ENCODE measurements at regions of chr11 and their contacts with region 1.

Region 1: GRCh38 chr11:70397983-70398833 is at the start of gene CTTN:
- DNase-seq: peak; percentile 64
- H3K4me3 ChIP-seq: peak within 1 kb of the TSS; percentile 77 to 91
- H3K27ac ChIP-seq: peak within 1 kb of the TSS; percentile 83 to 84
- H3K4me1 ChIP-seq: no peaks in the 10 kb centered on the region
- H3K27me3 ChIP-seq: no peaks in the 10 kb centered on the region
- CTCF ChIP-seq: no peak
- POLR2A ChIP-seq: peak; percentile 90
- total RNA-seq, gene CTTN: 208 to 348 TPM

Region 2: GRCh38 chr11:70202898-70203748 is 195.1 kb before region 1 on chr11 and contains the start of gene FADD:
- intact Hi-C with region 1: loop called (anchors 10 kb)
- DNase-seq: peak; percentile 84
- H3K4me3 ChIP-seq: peak within 1 kb of the TSS; percentile 94 to 96
- H3K27ac ChIP-seq: peak within 1 kb of the TSS; percentile 75 to 77
- H3K4me1 ChIP-seq: peaks cover 8% of the 10 kb centered on the region
- H3K27me3 ChIP-seq: no peaks in the 10 kb centered on the region
- CTCF ChIP-seq: peak in 2 of 4 experiments; percentile 14 to 24
- POLR2A ChIP-seq: peak; percentile 74
- total RNA-seq, gene FADD: 16.0 to 18.4 TPM

Region 3: DNA sequence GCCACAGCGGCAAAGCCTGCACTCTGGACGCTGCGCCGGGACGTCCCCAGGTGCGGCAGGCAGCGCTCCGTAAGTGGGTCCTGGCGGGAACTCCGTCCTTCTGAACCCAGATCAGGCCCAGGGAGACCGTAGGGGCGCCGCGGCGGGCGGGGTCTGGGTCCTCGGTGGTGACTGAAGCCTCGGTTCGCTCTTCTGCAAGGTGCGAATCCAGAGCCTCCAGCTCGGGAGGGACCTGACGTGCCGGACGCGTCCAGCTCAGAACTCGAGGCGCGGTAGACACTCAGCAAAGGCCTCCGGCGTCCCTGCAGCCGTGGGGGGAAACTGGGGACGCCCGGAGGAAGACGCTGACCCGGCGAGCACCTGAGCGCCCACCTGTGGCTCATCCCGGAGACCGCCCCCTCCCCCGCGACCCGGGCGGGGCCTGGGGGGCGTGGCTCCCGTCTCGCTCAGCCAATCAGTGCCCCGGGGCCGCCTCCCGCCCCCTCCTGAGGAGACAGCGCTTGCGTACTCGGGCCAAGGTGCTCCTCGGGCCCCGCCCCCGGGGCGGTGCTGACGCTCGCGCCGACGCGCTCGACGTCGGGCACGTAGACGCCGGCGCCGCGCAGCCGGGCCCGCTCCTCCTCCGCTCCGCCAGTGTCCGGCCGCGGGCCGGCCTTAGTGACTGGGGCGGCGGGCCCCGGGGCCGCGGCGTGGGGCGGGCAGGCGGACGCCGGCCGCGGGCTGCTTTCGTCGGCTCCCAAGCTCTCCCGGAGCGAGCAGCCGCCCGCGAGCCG is 127.9 kb before region 1 on chr11 and contains the start of gene PPFIA1:
- intact Hi-C with region 1: loop called (anchors 5 kb)
- DNase-seq: peak; percentile 96
- H3K4me3 ChIP-seq: peak within 1 kb of the TSS; percentile 92 to 97
- H3K27ac ChIP-seq: peak within 1 kb of the TSS; percentile 82 to 91
- H3K4me1 ChIP-seq: no peaks in the 10 kb centered on the region
- H3K27me3 ChIP-seq: no peaks in the 10 kb centered on the region
- CTCF ChIP-seq: peak in 2 of 4 experiments; percentile 14 to 39
- POLR2A ChIP-seq: peak; percentile 91
- total RNA-seq, gene PPFIA1: 29.1 to 61.8 TPM

Region 4: GRCh38 chr11:70326365-70326811 is 71.8 kb before region 1 on chr11:
- intact Hi-C with region 1: loop called (anchors 10 kb)
- DNase-seq: peak; percentile 20
- H3K4me3 ChIP-seq: no peak overlapping the region
- H3K27ac ChIP-seq: no peak overlapping the region
- H3K4me1 ChIP-seq: no peaks in the 10 kb centered on the region
- H3K27me3 ChIP-seq: no peaks in the 10 kb centered on the region
- CTCF ChIP-seq: no peak
- POLR2A ChIP-seq: no peak

Measured in prostate gland (tissue), 2 donors.